Aorta (tissue), 5 donors: ENCODE measurements at regions of chr9 and their contacts with region 1.

Region 1: DNA sequence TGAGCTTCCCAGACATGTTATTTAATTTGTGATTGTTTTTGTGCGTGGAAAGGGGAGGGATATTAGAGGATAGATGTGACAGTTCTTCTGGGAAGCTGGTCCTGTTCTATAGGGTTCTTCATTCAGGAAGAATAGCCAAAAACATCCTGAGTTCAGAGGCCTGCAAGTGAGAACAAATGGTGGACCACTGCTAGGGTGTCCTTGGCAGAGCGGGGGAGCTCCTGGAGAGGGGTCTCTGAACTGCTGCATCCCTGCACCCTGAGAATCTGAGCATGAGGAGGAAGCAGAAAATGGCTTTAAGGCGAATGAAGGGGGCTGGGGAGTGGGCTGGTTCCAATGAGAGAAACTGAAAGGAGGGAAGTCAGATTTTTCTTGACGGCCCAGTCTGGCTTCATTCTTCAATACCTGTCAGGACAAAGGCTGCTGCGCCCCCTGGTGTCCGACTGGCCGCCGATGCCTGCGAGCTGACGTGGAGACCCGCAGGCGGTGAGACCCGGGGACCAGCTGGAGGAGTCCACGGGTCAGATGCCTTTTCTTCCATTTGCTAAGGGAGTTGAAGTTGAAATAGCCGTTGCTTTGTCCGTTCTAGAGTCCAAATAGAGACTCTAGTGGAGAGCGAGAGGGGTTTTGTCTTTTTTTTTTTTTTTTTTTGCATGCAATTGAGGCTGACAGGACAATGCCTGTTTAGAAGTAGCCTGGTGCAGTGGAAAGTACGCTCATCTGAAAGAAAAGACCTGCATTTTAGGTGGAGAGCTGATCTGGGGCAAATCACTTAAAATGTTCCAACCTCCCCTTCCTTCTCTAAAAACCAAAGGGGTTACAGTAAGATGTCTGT is 39.5 kb upstream of the NFIB start:
- DNase-seq: peak; percentile 95 to 99
- ATAC-seq: peak; percentile 83
- H3K4me3 ChIP-seq: peak overlapping the region in 1 of 2 donors; percentile 5
- H3K27ac ChIP-seq: peak overlapping the region; percentile 6 to 65
- H3K4me1 ChIP-seq: peaks cover 4% of the 10 kb centered on the region in 2 donors
- H3K27me3 ChIP-seq: no peaks in the 10 kb centered on the region

Region 2: DNA sequence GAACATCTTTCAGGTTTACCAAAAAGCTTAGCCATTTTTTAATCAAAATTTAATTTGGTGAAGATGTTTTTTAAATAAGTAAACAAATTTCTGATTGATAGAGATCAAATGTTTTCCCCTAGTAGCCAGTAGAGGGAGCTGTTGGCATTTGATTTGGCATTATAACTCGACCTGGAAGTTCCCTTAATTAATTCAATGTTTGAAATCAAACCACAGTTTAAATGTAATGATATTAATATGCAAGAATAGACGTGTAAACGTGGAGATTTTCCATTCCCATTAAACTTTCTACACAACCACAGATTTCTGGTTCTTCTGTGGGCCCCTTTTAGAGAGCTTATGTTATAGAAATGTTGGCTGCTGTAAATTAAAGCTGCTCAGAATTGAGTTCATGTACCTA is 925.9 kb before region 1 on chr9:
- intact Hi-C with region 1: loop called (anchors 5 kb)
- DNase-seq: no peak
- ATAC-seq: no peak
- H3K4me3 ChIP-seq: no peak overlapping the region
- H3K27ac ChIP-seq: no peak overlapping the region
- H3K4me1 ChIP-seq: no peaks in the 10 kb centered on the region
- H3K27me3 ChIP-seq: no peaks in the 10 kb centered on the region

Region 3: DNA sequence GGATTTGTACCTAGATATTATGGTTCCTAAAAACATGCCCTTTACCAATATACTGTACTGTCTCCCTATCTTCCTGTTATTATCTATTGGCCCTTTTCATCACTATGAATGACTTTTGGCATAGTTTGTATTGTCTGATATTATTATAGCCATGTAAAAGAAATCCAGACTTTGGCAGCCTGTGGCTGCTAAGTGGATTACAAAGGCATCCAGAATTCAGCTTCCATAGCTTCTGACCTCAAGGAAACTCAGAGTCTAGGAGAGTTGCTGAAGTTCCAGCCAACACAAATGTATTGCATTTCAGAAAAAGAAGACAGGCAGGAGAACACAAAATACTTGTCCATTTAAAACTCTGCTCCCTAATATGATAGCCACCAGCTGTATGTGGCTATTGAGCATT is 754.7 kb before region 1 on chr9:
- intact Hi-C with region 1: loop called in 1 of 2 experiments (anchors 10 kb)
- DNase-seq: no peak
- ATAC-seq: no peak
- H3K4me3 ChIP-seq: no peak overlapping the region
- H3K27ac ChIP-seq: no peak overlapping the region
- H3K4me1 ChIP-seq: no peaks in the 10 kb centered on the region
- H3K27me3 ChIP-seq: no peaks in the 10 kb centered on the region

Region 4: DNA sequence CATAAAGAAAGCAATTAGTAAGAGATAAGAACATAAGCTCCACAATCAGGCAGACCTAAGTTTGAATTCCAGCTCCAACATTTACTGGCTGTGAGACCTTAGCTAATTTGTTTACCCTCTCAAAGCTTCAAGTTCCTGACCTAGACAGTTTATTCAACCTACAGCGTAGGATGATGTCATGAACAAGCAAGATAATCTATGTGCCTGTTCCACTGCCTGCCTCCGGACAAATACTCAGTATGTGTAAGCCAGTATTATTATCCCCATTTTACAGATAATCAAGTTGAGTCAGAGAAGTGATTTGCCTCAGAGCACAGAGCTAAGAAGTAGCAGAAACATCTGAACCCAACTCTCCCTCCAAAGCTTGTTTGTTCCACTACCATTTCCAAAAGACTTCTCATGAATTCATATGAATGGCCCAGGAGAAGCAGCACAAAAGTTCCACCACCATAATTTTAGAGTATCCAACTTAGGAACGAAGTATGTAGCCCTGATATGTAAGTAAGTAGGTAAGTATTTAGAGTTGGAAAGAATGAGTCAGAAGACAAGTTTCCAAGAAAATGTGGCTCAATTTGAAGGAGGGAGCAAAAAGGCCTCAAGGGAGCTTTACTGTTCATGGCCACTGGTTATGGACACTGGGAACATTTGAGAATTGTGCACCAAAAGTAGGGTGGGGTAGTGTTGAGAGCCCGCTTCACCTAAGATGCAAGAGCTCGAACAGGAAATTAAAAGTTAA is 437.7 kb before region 1 on chr9:
- intact Hi-C with region 1: loop called in 1 of 2 experiments (anchors 10 kb)
- DNase-seq: no peak
- ATAC-seq: peak; percentile 51
- H3K4me3 ChIP-seq: no peak overlapping the region
- H3K27ac ChIP-seq: peak overlapping the region; percentile 67 to 71
- H3K4me1 ChIP-seq: peaks cover 3 to 4% of the 10 kb centered on the region in 2 donors
- H3K27me3 ChIP-seq: no peaks in the 10 kb centered on the region

Region 5: GRCh38 chr9:14119694-14120514 is 233.5 kb before region 1 on chr9:
- intact Hi-C with region 1: no loop called
- DNase-seq: no peak
- ATAC-seq: no peak
- H3K4me3 ChIP-seq: no peak overlapping the region
- H3K27ac ChIP-seq: no peak overlapping the region
- H3K4me1 ChIP-seq: no peaks in the 10 kb centered on the region
- H3K27me3 ChIP-seq: no peaks in the 10 kb centered on the region

Region 6: DNA sequence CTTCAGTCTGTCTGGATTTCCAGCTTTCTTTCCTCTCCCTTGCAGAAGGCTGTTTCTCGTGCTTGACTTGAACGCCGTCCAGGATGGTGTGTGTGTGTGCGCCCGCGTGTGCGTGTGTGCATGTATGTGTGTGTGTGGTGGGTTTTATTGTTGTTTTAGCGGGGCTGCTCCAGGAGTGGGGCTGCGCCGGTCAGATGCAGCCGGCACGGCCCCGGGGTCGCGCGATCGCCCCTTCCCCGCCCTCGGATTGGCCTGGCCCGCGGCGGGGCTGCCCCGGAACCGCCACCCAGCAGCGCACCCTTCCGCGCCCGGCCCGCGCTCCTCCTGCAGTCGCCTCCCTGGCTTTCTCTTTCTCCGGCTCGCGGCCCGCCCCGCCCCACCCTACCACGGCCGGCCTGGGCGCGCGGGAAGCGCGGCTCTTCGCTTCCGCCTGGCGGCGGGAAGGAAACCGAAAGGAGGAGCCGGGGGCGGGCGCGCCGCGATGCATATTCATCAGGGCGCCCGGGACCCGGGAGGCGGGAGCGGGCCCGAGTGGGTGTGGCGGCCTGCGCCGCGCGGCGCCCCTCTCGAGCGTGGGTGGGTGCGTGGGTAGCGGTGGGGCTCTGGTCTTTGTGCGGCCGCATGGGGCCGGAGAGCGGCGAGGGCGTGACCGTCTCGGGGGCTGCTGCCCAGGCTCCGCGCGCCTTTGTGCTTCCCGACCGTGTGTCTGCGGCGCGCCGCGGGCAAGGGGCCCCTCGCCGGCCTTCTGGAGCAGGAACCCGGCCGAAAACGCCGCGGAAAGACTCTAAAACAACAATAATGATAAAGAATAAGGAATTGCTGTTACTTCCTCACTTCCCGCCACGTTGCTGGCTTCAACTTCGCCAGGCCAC is 31.0 kb before region 1 on chr9:
- intact Hi-C with region 1: loop called in 1 of 2 experiments (anchors 2 kb)
- DNase-seq: peak; percentile 95 to 97
- ATAC-seq: peak; percentile 94
- H3K4me3 ChIP-seq: peak overlapping the region; percentile 54 to 79
- H3K27ac ChIP-seq: peak overlapping the region; percentile 31 to 87
- H3K4me1 ChIP-seq: no peaks in the 10 kb centered on the region
- H3K27me3 ChIP-seq: no peaks in the 10 kb centered on the region